IMR-90 (cell line): ENCODE measurements at regions of chr17 and their contacts with region 1.

Region 1: GRCh38 chr17:40113110-40113906 is 8.5 kb upstream of the MSL1 start:
- DNase-seq: peak; percentile 95
- ATAC-seq: peak; percentile 58
- H3K4me3 ChIP-seq: peak overlapping the region; percentile 24
- H3K27ac ChIP-seq: peak overlapping the region; percentile 90
- H3K4me1 ChIP-seq: peaks cover 36% of the 10 kb centered on the region
- H3K27me3 ChIP-seq: no peaks in the 10 kb centered on the region
- CTCF ChIP-seq: peak; percentile 94; the same call in 1 of the 2 replicates
- POLR2A ChIP-seq: no peak
- RAD21 ChIP-seq: peak; percentile 84

Region 2: GRCh38 chr17:40018211-40019121 is 94.8 kb before region 1 on chr17:
- CTCF ChIA-PET with region 1: interaction called, 4 read pairs
- POLR2A ChIA-PET with region 1: no interaction called
- dilution Hi-C with region 1: no loop called
- in situ Hi-C with region 1: no loop called
- intact Hi-C with region 1: loop called (anchors 1 kb)
- DNase-seq: no peak
- ATAC-seq: peak; percentile 14
- H3K4me3 ChIP-seq: no peak overlapping the region
- H3K27ac ChIP-seq: peak overlapping the region; percentile 64
- H3K4me1 ChIP-seq: peaks cover 33% of the 10 kb centered on the region
- H3K27me3 ChIP-seq: no peaks in the 10 kb centered on the region
- CTCF ChIP-seq: no peak
- POLR2A ChIP-seq: no peak
- RAD21 ChIP-seq: no peak

Region 3: GRCh38 chr17:40068917-40069750 is 44.2 kb before region 1 on chr17:
- CTCF ChIA-PET with region 1: interaction called, 4 read pairs
- POLR2A ChIA-PET with region 1: no interaction called
- dilution Hi-C with region 1: no loop called
- in situ Hi-C with region 1: no loop called
- intact Hi-C with region 1: loop called (anchors 2 kb)
- DNase-seq: peak; percentile 84
- ATAC-seq: peak; percentile 53
- H3K4me3 ChIP-seq: peak overlapping the region; percentile 23
- H3K27ac ChIP-seq: peak overlapping the region; percentile 56
- H3K4me1 ChIP-seq: peaks cover 57% of the 10 kb centered on the region
- H3K27me3 ChIP-seq: no peaks in the 10 kb centered on the region
- CTCF ChIP-seq: no peak
- POLR2A ChIP-seq: no peak
- RAD21 ChIP-seq: no peak

Region 4: DNA sequence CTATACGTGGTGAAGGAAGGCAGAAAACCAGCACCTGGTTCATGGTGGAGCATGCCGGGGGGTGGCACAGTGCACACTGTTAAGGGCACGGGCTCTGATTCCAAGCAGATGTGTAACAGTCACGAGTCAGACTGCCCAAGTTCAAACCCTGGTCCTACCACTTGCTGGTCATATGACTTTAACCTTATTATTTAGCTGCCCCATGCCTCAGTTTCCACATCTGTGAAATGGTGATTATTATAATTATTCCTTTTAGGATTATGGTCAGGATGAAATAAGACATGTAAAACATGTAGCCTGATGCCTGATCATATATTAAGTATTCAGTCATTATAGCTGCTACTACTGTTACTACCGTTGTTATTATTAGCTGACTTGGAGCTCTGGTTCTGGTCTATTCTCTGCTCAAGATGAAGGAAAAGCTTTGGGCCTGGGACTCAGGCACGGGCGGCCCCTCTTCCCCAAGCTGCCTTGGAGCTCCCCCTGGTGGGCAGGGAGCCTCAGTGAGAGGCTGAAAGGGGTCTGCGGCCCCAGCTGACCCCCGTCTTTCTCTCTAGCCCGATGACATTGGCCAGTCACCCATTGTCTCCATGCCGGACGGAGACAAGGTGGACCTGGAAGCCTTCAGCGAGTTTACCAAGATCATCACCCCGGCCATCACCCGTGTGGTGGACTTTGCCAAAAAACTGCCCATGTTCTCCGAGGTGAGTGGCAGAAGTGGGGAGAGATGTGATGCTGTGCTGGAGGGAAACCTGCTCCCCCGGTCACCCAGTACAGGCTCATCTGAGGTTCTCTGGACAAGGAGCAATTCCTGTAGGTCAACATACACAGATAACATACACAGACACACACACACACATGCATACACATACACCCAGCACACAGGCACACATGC is 26.9 kb before region 1 on chr17:
- CTCF ChIA-PET with region 1: interaction called, 12 read pairs
- POLR2A ChIA-PET with region 1: no interaction called
- dilution Hi-C with region 1: no loop called
- in situ Hi-C with region 1: no loop called
- intact Hi-C with region 1: no loop called
- DNase-seq: no peak
- ATAC-seq: peak; percentile 83
- H3K4me3 ChIP-seq: no peak overlapping the region
- H3K27ac ChIP-seq: no peak overlapping the region
- H3K4me1 ChIP-seq: no peaks in the 10 kb centered on the region; the same call in 1 of the 2 replicates
- H3K27me3 ChIP-seq: no peaks in the 10 kb centered on the region
- CTCF ChIP-seq: peak; percentile 68
- POLR2A ChIP-seq: no peak
- RAD21 ChIP-seq: peak; percentile 80

Region 5: GRCh38 chr17:40139566-40140058 is 26.3 kb after region 1 on chr17:
- CTCF ChIA-PET with region 1: interaction called, 6 read pairs
- POLR2A ChIA-PET with region 1: no interaction called
- dilution Hi-C with region 1: no loop called
- in situ Hi-C with region 1: no loop called
- intact Hi-C with region 1: loop called (anchors 1 kb)
- DNase-seq: no peak
- ATAC-seq: peak; percentile 0
- H3K4me3 ChIP-seq: peak overlapping the region; percentile 58
- H3K27ac ChIP-seq: peak overlapping the region; percentile 81
- H3K4me1 ChIP-seq: peaks cover 4% of the 10 kb centered on the region
- H3K27me3 ChIP-seq: no peaks in the 10 kb centered on the region
- CTCF ChIP-seq: no peak
- POLR2A ChIP-seq: no peak
- RAD21 ChIP-seq: no peak

Region 6: GRCh38 chr17:40157973-40158372 is 44.7 kb after region 1 on chr17:
- CTCF ChIA-PET with region 1: no interaction called
- POLR2A ChIA-PET with region 1: no interaction called
- dilution Hi-C with region 1: no loop called
- in situ Hi-C with region 1: no loop called
- intact Hi-C with region 1: no loop called
- DNase-seq: no peak
- ATAC-seq: no peak
- H3K4me3 ChIP-seq: no peak overlapping the region
- H3K27ac ChIP-seq: no peak overlapping the region
- H3K4me1 ChIP-seq: no peaks in the 10 kb centered on the region; the same call in 1 of the 2 replicates
- H3K27me3 ChIP-seq: no peaks in the 10 kb centered on the region
- CTCF ChIP-seq: no peak
- POLR2A ChIP-seq: no peak
- RAD21 ChIP-seq: no peak

Region 7: DNA sequence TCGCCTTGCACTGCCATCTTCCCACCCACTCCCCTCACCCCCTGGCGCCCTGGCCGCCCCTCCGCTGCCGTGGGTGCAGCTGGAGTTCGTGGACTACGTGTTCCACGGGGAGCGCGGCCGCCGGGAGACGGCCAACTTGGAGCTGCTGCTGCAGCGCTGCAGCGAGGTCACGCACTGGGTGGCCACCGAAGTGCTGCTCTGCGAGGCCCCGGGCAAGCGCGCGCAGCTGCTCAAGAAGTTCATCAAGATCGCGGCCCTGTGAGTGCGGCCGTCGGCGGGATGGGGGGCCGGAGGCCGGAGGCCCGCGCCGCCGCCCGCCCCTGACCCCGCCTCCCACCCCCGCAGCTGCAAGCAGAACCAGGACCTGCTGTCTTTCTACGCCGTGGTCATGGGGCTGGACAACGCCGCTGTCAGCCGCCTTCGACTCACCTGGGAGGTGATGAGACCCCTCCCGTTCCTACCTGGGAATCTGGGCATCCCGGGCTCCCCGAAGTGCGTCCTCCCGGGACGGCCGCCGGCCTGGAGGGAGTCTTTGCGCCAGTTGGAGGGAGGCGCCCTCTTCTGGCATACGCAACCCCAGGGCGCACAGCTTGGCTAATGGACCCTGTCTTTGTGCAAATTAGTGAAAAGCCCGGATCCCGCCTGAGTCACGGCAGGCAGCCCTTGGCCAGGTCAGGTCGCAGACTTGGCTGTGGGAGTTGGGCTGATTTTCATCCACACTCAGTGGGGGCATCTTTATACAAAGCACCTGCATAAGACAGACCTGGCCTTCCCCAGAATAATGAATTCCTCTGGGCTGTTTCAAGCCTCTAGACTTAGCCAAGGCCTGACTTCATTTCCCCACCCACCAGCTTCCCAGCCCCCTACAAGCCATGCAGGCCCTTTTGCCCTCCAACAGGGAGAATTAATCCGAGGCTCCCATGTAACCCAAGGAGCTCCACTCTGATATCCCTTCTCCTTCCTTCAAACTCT is 78.2 kb after region 1 on chr17:
- CTCF ChIA-PET with region 1: interaction called, 10 read pairs
- POLR2A ChIA-PET with region 1: no interaction called
- dilution Hi-C with region 1: no loop called
- in situ Hi-C with region 1: no loop called
- intact Hi-C with region 1: no loop called
- DNase-seq: peak; percentile 76
- ATAC-seq: peak; percentile 93
- H3K4me3 ChIP-seq: peak overlapping the region; percentile 79
- H3K27ac ChIP-seq: peak overlapping the region; percentile 48; the same call in 1 of the 2 replicates
- H3K4me1 ChIP-seq: peaks cover 7% of the 10 kb centered on the region; the same call in 1 of the 2 replicates
- H3K27me3 ChIP-seq: no peaks in the 10 kb centered on the region
- CTCF ChIP-seq: peak; percentile 80
- POLR2A ChIP-seq: no peak
- RAD21 ChIP-seq: peak; percentile 63